ENCODE measurements at regions of chr10 and their contacts with region 1.

Region 1: GRCh38 chr10:91479583-91479982 is 69.4 kb downstream of the HECTD2 start:
- DNase-seq: no peak
- ATAC-seq: no peak
- H3K4me3 Mint-ChIP-seq: no peak overlapping the region
- H3K27ac Mint-ChIP-seq: no peak overlapping the region
- H3K4me1 Mint-ChIP-seq: no peaks in the 10 kb centered on the region
- H3K27me3 Mint-ChIP-seq: no peaks in the 10 kb centered on the region

Region 2: DNA sequence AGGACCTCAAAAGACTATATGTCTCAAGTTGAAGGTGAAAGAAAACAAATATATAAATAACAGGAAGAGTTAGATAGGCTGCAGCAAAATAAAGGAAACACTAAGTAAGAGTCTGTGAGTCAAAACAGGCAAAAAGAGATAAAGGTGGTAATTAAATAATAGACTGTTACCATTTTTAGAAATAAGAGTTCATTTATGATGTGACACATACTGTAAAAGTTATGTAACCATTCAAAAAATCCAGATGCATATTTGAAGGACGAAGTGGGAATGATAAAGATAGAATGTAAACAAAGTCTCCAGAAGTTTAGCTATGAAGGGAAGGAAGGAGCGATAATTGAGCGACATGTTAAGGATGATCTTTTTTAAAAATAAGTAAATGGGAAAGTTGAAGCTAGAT is 18.9 kb before region 1 on chr10:
- CTCF ChIA-PET with region 1: interaction called, 6 read pairs
- POLR2A ChIA-PET with region 1: no interaction called
- intact Hi-C with region 1: loop called in 1 of 2 experiments (anchors 2 kb)
- DNase-seq: no peak
- ATAC-seq: no peak
- H3K4me3 Mint-ChIP-seq: no peak overlapping the region
- H3K27ac Mint-ChIP-seq: no peak overlapping the region
- H3K4me1 Mint-ChIP-seq: no peaks in the 10 kb centered on the region
- H3K27me3 Mint-ChIP-seq: no peaks in the 10 kb centered on the region

Region 3: GRCh38 chr10:91891285-91892001 is 411.9 kb after region 1 on chr10:
- CTCF ChIA-PET with region 1: no interaction called
- POLR2A ChIA-PET with region 1: no interaction called
- intact Hi-C with region 1: no loop called
- DNase-seq: no peak
- ATAC-seq: no peak
- H3K4me3 Mint-ChIP-seq: no peak overlapping the region
- H3K27ac Mint-ChIP-seq: no peak overlapping the region
- H3K4me1 Mint-ChIP-seq: peaks cover 10% of the 10 kb centered on the region
- H3K27me3 Mint-ChIP-seq: peaks cover 22% of the 10 kb centered on the region